Uterus (tissue), 4 donors: ENCODE measurements at regions of chrX and their contacts with region 1.

Region 1: DNA sequence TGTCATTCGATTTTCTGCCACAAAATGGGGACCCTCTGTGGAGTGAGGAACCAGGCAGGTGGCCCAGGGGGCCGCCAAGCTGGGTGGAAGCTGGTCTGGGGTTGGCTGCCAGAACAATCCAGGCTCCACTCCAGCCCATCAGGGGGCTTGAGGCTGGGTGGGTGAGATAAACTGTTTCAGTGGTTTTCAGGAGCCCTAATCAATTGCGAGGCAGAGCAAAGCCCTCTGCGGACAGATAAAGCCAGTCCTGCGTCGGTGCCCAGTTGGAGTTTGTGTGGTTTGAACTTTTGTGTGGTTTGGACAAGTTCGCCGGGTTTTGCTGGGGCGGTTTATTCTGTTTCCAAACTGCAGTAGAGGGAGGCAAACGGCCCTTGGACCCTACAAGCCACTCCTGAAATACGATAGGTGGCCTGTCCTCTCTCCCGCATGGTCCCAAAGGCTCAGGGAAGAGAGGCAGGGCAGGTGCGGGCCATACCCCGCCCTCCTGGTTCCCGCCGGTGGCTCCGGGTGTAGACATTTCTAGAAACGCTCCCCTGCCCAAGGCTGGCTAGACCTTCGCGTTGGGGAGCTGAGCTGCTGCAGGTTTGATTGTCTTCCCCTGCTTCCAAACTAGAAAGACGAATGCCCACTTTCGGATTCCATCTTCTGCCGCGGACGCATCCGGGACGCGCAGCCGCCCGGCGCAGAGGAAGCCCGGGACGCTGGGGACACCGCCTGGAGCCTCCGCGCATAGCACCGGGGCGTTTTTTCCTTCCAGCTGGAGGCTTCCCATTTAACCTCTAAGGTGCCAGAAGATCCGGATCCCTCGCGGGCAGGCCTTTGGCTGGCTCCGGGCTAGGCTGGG is 169.0 kb upstream of the BCOR start:
- DNase-seq: peak; percentile 58 to 75
- H3K4me3 ChIP-seq: peak overlapping the region; percentile 28 to 37
- H3K27ac ChIP-seq: peak overlapping the region; percentile 20 to 78
- H3K4me1 ChIP-seq: no peaks in the 10 kb centered on the region
- H3K27me3 ChIP-seq: no peaks in the 10 kb centered on the region
- CTCF ChIP-seq: peak; percentile 51 to 71 (median 61)
- POLR2A ChIP-seq: no peak

Region 2: DNA sequence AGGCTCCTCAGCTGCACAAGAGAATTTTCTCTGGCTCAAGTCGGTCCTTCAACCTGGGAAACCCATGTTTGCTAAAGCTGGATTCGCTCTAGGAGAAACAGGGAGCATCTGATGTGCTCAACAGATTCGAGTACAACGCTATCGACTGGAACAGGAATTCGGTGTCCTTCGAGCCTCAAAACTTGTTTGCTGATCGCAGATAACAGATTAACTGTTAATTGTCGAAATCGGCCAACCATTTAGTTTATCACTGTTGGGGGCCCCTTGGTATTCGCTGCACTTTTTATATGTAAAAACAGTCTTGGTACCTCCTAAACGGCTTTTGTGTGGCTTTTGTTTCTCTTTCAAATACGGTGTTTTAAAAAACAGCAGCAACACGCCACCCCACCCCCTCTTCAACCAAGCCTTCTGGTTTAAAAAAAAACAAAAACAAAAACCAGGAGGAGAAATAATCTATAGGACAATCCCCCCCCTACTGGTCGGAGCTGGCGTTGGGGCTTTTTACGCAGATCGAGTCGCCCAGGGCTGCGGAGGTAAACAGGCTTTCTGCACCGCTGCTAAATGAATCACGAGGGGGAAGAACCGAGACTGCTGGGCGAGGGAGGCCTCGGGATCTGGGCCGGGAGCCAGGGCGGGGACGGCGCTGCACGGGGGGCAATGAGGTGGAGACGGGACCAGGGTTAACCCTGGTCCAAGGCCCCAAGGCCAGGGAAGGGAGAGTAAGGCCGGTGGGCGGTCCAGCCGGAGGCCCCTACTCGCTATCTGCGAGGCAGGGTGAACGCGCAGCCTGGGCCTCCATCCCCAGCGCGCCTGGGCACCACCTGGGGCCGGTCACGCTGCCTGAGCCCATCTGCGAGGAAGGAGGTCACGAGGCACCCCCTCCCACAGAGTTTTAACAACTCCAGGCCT is 97.3 kb before region 1 on chrX:
- intact Hi-C with region 1: loop called (anchors 10 kb)
- DNase-seq: peak; percentile 55 to 73
- H3K4me3 ChIP-seq: no peak overlapping the region
- H3K27ac ChIP-seq: peak overlapping the region; percentile 30 to 93
- H3K4me1 ChIP-seq: peaks cover 0 to 7% of the 10 kb centered on the region in 2 donors
- H3K27me3 ChIP-seq: no peaks in the 10 kb centered on the region
- CTCF ChIP-seq: peak in 2 of 4 experiments; percentile 25 to 42
- POLR2A ChIP-seq: no peak

Region 3: GRCh38 chrX:40227125-40227524 is 39.6 kb before region 1 on chrX:
- intact Hi-C with region 1: no loop called
- DNase-seq: no peak
- H3K4me3 ChIP-seq: no peak overlapping the region
- H3K27ac ChIP-seq: no peak overlapping the region
- H3K4me1 ChIP-seq: no peaks in the 10 kb centered on the region
- H3K27me3 ChIP-seq: no peaks in the 10 kb centered on the region
- CTCF ChIP-seq: no peak
- POLR2A ChIP-seq: no peak